Transverse colon (tissue), 4 donors: ENCODE measurements at regions of chr17 and their contacts with region 1.

Region 1: DNA sequence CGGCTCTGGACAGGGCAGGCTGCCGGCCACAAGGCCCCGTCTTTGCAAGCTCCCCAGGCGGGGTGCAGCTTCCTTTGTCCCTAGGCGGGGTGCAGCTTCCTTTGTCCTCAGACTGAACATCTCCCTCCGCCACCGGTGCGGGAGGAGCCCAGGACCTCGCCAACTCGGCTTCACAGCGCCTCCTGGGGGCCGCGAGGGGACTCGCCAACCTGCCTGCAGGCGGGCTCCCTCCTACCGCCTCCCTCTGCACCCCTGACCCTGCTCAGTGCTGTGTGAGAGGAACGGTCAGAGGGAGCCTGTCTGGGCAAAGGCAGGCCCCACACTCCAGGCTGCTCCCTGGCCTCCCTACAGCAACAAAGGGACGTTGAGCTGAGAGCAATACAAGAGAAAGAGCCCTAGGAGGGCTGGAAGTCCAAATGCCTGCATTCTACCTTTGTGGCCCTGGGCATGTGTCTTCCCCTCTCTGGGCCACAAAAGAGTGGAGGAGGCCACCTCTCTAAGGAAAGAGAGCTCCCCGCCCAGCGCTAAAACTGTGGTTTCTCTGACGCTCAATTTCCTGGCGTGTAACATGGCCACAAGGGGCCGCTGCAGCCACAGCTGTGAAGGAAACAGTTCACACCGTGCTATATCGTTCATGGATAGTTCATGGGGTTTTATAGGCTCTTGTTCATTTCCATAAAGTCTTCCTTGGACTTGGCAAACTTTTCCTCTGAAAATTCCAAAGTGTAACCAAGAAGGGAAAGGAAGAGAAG is 20.9 kb upstream of the KRT19 start:
- DNase-seq: peak; percentile 92
- H3K4me3 ChIP-seq: peak overlapping the region in 3 of 4 donors; percentile 12 to 37 (median 21)
- H3K27ac ChIP-seq: peak overlapping the region; percentile 80 to 88 (median 84)
- H3K4me1 ChIP-seq: peaks cover 6 to 48% (median 35%) of the 10 kb centered on the region in 4 donors
- H3K27me3 ChIP-seq: no peaks in the 10 kb centered on the region
- CTCF ChIP-seq: peak; percentile 73 to 98 (median 90)
- EP300 ChIP-seq: no peak
- POLR2A ChIP-seq: peak; percentile 16

Region 2: GRCh38 chr17:40909351-40909750 is 639.7 kb before region 1 on chr17:
- in situ Hi-C with region 1: loop called in 2 of 4 experiments (anchors 10 to 25 kb)
- intact Hi-C with region 1: no loop called
- DNase-seq: peak; percentile 86
- H3K4me3 ChIP-seq: no peak overlapping the region
- H3K27ac ChIP-seq: peak overlapping the region; percentile 21 to 49 (median 37)
- H3K4me1 ChIP-seq: peaks cover 9 to 24% (median 9%) of the 10 kb centered on the region in 4 donors
- H3K27me3 ChIP-seq: no peaks in the 10 kb centered on the region
- CTCF ChIP-seq: peak; percentile 61 to 91 (median 75)
- EP300 ChIP-seq: no peak
- POLR2A ChIP-seq: no peak

Region 3: GRCh38 chr17:41496820-41497408 is 52.1 kb before region 1 on chr17:
- in situ Hi-C with region 1: no loop called
- intact Hi-C with region 1: no loop called
- DNase-seq: peak; percentile 84
- H3K4me3 ChIP-seq: no peak overlapping the region
- H3K27ac ChIP-seq: peak overlapping the region in 3 of 4 donors; percentile 44 to 49 (median 49)
- H3K4me1 ChIP-seq: peaks cover 0 to 8% (median 3%) of the 10 kb centered on the region in 4 donors
- H3K27me3 ChIP-seq: no peaks in the 10 kb centered on the region
- CTCF ChIP-seq: peak; percentile 40 to 93 (median 71)
- EP300 ChIP-seq: no peak
- POLR2A ChIP-seq: peak; percentile 69

Region 4: GRCh38 chr17:41593311-41593981 is 44.4 kb after region 1 on chr17:
- in situ Hi-C with region 1: no loop called
- intact Hi-C with region 1: no loop called
- DNase-seq: no peak
- H3K4me3 ChIP-seq: no peak overlapping the region
- H3K27ac ChIP-seq: no peak overlapping the region
- H3K4me1 ChIP-seq: no peaks in the 10 kb centered on the region
- H3K27me3 ChIP-seq: peaks cover 3% of the 10 kb centered on the region
- CTCF ChIP-seq: no peak
- EP300 ChIP-seq: no peak
- POLR2A ChIP-seq: no peak

Region 5: DNA sequence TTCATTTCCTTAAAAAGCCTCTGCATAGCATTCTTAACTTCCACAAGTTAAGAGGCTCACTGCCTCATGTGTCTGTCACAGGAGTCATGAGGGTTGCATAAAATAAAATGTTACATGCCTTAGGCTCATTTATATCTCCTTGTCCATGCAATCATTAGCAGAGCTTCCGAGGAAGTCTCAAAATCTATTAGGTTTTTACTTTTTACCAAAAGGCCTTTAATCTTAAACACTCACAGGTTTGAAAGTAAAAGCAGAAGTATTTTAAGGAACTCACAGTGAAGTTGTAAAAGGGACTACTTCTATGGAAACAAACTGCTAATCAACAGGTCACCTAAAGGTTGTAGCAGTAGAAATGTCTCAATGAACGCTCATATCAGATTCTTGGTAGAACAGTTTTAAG is 904.4 kb after region 1 on chr17:
- in situ Hi-C with region 1: no loop called
- intact Hi-C with region 1: no loop called
- DNase-seq: no peak
- H3K4me3 ChIP-seq: no peak overlapping the region
- H3K27ac ChIP-seq: no peak overlapping the region
- H3K4me1 ChIP-seq: peaks cover 0 to 20% (median 3%) of the 10 kb centered on the region in 4 donors
- H3K27me3 ChIP-seq: no peaks in the 10 kb centered on the region
- CTCF ChIP-seq: no peak
- EP300 ChIP-seq: no peak
- POLR2A ChIP-seq: no peak